Transverse colon (tissue), 4 donors: ENCODE measurements at regions of chr19 and their contacts with region 1.

Region 1: GRCh38 chr19:48363810-48364563 is at the starts of genes SYNGR4 and TMEM143:
- DNase-seq: peak; percentile 98
- H3K4me3 ChIP-seq: peak within 1 kb of the TSS; percentile 29 to 83 (median 46)
- H3K27ac ChIP-seq: peak within 1 kb of the TSS; percentile 92 to 99 (median 96)
- H3K4me1 ChIP-seq: peaks cover 3 to 23% (median 15%) of the 10 kb centered on the region in 4 donors
- H3K27me3 ChIP-seq: no peaks in the 10 kb centered on the region
- CTCF ChIP-seq: no peak
- EP300 ChIP-seq: no peak
- POLR2A ChIP-seq: peak; percentile 8
- total RNA-seq, gene SYNGR4: not detected
- total RNA-seq, gene TMEM143: 9.1 to 27.7 (median 15.2) TPM

Region 2: GRCh38 chr19:48102870-48103751 is 260.9 kb before region 1 on chr19:
- in situ Hi-C with region 1: no loop called
- intact Hi-C with region 1: loop called (anchors 10 kb)
- DNase-seq: peak; percentile 27
- H3K4me3 ChIP-seq: no peak overlapping the region
- H3K27ac ChIP-seq: no peak overlapping the region
- H3K4me1 ChIP-seq: peaks cover 0 to 10% (median 4%) of the 10 kb centered on the region in 4 donors
- H3K27me3 ChIP-seq: no peaks in the 10 kb centered on the region
- CTCF ChIP-seq: peak; percentile 63 to 77 (median 74)
- EP300 ChIP-seq: no peak
- POLR2A ChIP-seq: no peak

Region 3: GRCh38 chr19:48618916-48619691 is 255.1 kb after region 1 on chr19 and contains the starts of genes RPL18 and SPHK2:
- in situ Hi-C with region 1: no loop called
- intact Hi-C with region 1: no loop called
- DNase-seq: peak; percentile 98
- H3K4me3 ChIP-seq: peak within 1 kb of the TSS; percentile 56 to 90 (median 68)
- H3K27ac ChIP-seq: peak within 1 kb of the TSS; percentile 90 to 97 (median 94)
- H3K4me1 ChIP-seq: peaks cover 31 to 55% (median 49%) of the 10 kb centered on the region in 4 donors
- H3K27me3 ChIP-seq: no peaks in the 10 kb centered on the region
- CTCF ChIP-seq: peak in 1 of 5 experiments; percentile 13
- EP300 ChIP-seq: peak; percentile 49
- POLR2A ChIP-seq: peak; percentile 96
- total RNA-seq, gene RPL18: 1,394 to 2,260 (median 1,686) TPM
- total RNA-seq, gene SPHK2: 41.8 to 185 (median 68.7) TPM